ENCODE measurements at regions of chr1 and their contacts with region 1.

Region 1: GRCh38 chr1:96845464-96845863 is 123.9 kb downstream of the PTBP2 start:
- DNase-seq: peak; percentile 35
- H3K4me3 ChIP-seq: no peak overlapping the region
- H3K27ac ChIP-seq: no peak overlapping the region
- H3K4me1 ChIP-seq: no peaks in the 10 kb centered on the region
- H3K27me3 ChIP-seq: no peaks in the 10 kb centered on the region
- CTCF ChIP-seq: peak; percentile 62 to 76
- POLR2A ChIP-seq: no peak

Region 2: DNA sequence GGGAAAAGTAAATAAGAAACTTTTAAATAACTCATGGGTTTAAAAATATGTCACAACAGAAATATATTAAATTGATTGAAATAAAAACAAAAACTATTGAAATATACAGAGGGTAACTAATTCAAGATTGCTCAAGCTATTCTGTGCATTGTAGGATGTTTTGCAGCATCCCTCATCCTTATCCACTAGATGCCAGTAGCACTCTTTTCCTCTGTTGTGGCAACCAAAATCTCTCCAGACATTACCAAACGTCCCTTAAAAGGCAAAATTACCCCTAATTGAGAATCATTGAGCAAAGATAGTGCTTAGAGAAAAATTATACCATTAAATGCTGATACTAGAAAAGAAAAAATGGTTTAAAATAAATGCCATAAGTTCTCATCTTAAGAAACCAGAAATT is 928.8 kb before region 1 on chr1:
- CTCF ChIA-PET with region 1: interaction called, 3 read pairs
- POLR2A ChIA-PET with region 1: no interaction called
- dilution Hi-C with region 1: no loop called
- intact Hi-C with region 1: loop called (anchors 1 kb)
- DNase-seq: peak; percentile 46
- H3K4me3 ChIP-seq: no peak overlapping the region
- H3K27ac ChIP-seq: no peak overlapping the region
- H3K4me1 ChIP-seq: no peaks in the 10 kb centered on the region
- H3K27me3 ChIP-seq: no peaks in the 10 kb centered on the region
- CTCF ChIP-seq: peak; percentile 25 to 51
- POLR2A ChIP-seq: no peak

Region 3: GRCh38 chr1:95953015-95953414 is 892.4 kb before region 1 on chr1:
- CTCF ChIA-PET with region 1: no interaction called
- POLR2A ChIA-PET with region 1: no interaction called
- dilution Hi-C with region 1: no loop called
- intact Hi-C with region 1: loop called (anchors 10 kb)
- DNase-seq: peak; percentile 11
- H3K4me3 ChIP-seq: no peak overlapping the region
- H3K27ac ChIP-seq: no peak overlapping the region
- H3K4me1 ChIP-seq: peaks cover under 1% of the 10 kb centered on the region
- H3K27me3 ChIP-seq: peaks cover 2 to 3% of the 10 kb centered on the region in 2 experiments
- CTCF ChIP-seq: no peak
- POLR2A ChIP-seq: no peak

Region 4: GRCh38 chr1:96080925-96081324 is 764.5 kb before region 1 on chr1:
- CTCF ChIA-PET with region 1: interaction called, 4 read pairs
- POLR2A ChIA-PET with region 1: no interaction called
- dilution Hi-C with region 1: no loop called
- intact Hi-C with region 1: loop called (anchors 5 kb)
- DNase-seq: no peak
- H3K4me3 ChIP-seq: no peak overlapping the region
- H3K27ac ChIP-seq: no peak overlapping the region
- H3K4me1 ChIP-seq: no peaks in the 10 kb centered on the region
- H3K27me3 ChIP-seq: no peaks in the 10 kb centered on the region
- CTCF ChIP-seq: no peak
- POLR2A ChIP-seq: no peak